ENCODE measurements at regions of chr22 and their contacts with region 1.

Region 1: GRCh38 chr22:37501610-37502341 is 15.6 kb upstream of the MFNG start:
- DNase-seq: no peak
- H3K4me3 ChIP-seq: no peak overlapping the region
- H3K27ac ChIP-seq: peak overlapping the region; percentile 52; the same call in 1 of the 2 replicates
- H3K4me1 ChIP-seq: peaks cover 43% of the 10 kb centered on the region
- H3K27me3 ChIP-seq: no peaks in the 10 kb centered on the region
- CTCF ChIP-seq: no peak

Region 2: GRCh38 chr22:37999956-38000272 is 498.1 kb after region 1 on chr22:
- CTCF ChIA-PET with region 1: no interaction called
- POLR2A ChIA-PET with region 1: interaction called, 11 read pairs
- intact Hi-C with region 1: no loop called
- DNase-seq: peak; percentile 82 to 91
- H3K4me3 ChIP-seq: no peak overlapping the region
- H3K27ac ChIP-seq: peak overlapping the region; percentile 57
- H3K4me1 ChIP-seq: peaks cover 32% of the 10 kb centered on the region
- H3K27me3 ChIP-seq: no peaks in the 10 kb centered on the region
- CTCF ChIP-seq: no peak

Measured in PC-9 (cell line).